ENCODE measurements at regions of chr10 and their contacts with region 1.

Region 1: DNA sequence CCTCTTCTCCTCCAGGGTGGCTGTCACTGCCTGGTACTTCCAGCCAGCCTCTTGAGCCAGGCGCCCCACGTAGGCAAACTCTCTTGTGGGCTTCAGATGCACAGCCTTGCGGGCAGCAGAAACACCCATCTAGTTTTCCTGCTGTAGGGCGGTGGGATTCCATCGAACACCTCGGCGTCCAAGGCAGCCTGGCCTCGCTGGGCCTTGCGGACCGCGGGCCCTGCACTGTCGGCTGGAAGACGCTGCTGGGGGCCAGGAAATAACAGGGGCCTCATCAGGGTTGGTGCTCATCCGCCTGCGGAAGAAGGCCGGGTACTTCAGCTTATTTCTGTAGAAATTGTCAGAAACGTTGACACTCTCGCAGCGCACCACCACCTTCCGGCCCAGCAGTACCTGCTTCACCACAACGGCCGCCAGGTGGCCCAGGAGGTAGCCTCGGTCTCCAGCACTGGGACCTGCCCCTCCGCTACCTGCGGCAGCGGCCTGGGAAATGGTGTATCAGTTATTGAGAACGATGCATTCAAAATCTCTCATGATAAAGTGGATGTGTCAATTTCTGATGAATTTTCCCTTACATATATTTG is 61.1 kb downstream of the WDFY4 start:
- DNase-seq: no peak
- ATAC-seq: peak; percentile 98
- H3K4me3 ChIP-seq: no peak overlapping the region
- H3K27ac ChIP-seq: no peak overlapping the region
- H3K4me1 ChIP-seq: no peaks in the 10 kb centered on the region
- H3K27me3 ChIP-seq: peaks cover 0 to 3% of the 10 kb centered on the region in 2 experiments; a peak in 2 of 5 replicates
- CTCF ChIP-seq: peak; percentile 59
- EP300 ChIP-seq: no peak
- POLR2A ChIP-seq: no peak
- RAD21 ChIP-seq: no peak

Region 2: DNA sequence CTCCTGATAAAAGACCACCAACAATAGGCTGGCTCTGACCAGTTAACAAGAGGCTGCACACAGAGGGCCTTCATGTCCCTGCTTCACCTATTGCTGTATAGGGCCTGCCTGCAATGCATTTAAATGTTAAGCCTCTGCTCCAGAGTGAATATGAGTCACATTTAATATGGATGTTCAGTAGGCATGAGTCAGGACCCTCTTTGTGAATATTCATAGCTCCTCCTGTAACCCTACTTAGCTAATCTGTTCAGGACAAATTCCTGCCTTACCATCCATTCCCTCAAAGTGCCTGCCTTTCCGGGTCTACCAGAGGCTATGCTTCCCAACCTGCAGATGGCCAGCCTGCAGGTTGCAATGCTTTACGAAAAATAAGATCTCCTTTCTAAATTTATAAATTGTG is 173.3 kb before region 1 on chr10:
- CTCF ChIA-PET with region 1: no interaction called
- POLR2A ChIA-PET with region 1: no interaction called
- in situ Hi-C with region 1: no loop called
- intact Hi-C with region 1: no loop called
- DNase-seq: no peak
- ATAC-seq: no peak
- H3K4me3 ChIP-seq: no peak overlapping the region
- H3K27ac ChIP-seq: no peak overlapping the region
- H3K4me1 ChIP-seq: no peaks in the 10 kb centered on the region
- H3K27me3 ChIP-seq: peaks cover 0 to 10% of the 10 kb centered on the region in 2 experiments; a peak in 2 of 5 replicates
- CTCF ChIP-seq: no peak
- EP300 ChIP-seq: no peak
- POLR2A ChIP-seq: no peak
- RAD21 ChIP-seq: no peak

Region 3: GRCh38 chr10:48821692-48822091 is 75.9 kb after region 1 on chr10:
- CTCF ChIA-PET with region 1: no interaction called
- POLR2A ChIA-PET with region 1: no interaction called
- in situ Hi-C with region 1: no loop called
- intact Hi-C with region 1: loop called (anchors 10 kb)
- DNase-seq: no peak
- ATAC-seq: no peak
- H3K4me3 ChIP-seq: no peak overlapping the region
- H3K27ac ChIP-seq: no peak overlapping the region
- H3K4me1 ChIP-seq: no peaks in the 10 kb centered on the region
- H3K27me3 ChIP-seq: peaks cover 4 to 18% of the 10 kb centered on the region in 2 experiments; a peak in 4 of 5 replicates
- CTCF ChIP-seq: no peak
- EP300 ChIP-seq: no peak
- POLR2A ChIP-seq: no peak
- RAD21 ChIP-seq: no peak